Cardiac septum (tissue), 1 donor: ENCODE measurements at regions of chr10 and their contacts with region 1.

Region 1: GRCh38 chr10:53403688-53404087 is 631.1 kb upstream of the MBL2 start:
- DNase-seq: peak; percentile 81

Region 2: DNA sequence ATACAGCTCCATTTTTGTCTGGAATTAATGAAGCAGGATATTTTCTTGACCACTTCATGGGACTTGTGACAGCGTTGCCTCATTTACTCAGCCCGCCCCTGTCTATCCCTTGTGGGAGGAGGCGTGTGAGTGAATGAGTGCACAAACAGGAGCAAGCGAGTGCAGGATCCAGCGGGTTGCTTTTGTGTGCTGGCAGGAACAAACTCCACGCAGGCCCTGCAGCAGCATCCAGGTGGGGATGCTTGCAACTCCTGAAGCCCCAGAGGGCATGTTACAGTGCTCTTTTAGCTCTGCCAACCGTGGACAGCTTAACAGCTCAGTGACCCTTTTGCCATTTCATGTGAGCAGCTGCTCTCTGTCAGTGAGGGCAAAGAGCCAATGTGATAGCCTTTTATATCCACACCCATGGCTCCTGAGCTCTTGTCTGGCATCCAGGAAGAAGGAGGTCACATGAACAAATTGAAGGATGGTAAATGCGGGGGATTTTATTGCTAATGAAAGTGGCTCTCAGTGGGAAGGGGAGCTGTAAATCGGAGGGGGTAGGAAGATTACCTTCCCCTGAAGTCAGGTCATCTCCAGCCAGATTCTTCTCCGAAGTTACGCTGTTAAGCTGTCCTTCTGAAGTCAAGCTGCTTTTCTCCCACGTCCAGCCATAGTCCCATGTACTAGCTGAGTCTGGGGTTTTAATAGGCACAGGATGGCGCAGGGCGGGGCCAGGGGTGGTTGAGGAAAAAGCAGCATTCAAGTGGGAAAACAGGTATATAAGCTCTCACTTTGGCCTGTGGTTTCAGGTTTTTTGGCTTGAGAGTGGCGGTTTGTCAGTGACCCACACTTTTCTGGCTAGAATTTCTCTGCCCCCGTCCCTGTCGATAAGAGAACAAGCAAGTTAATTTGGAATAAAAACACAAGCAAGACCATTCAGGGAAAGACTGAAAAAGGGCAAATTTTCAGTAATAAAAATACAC is 83.6 kb after region 1 on chr10:
- intact Hi-C with region 1: loop called (anchors 1 kb)
- DNase-seq: peak; percentile 68

Region 3: DNA sequence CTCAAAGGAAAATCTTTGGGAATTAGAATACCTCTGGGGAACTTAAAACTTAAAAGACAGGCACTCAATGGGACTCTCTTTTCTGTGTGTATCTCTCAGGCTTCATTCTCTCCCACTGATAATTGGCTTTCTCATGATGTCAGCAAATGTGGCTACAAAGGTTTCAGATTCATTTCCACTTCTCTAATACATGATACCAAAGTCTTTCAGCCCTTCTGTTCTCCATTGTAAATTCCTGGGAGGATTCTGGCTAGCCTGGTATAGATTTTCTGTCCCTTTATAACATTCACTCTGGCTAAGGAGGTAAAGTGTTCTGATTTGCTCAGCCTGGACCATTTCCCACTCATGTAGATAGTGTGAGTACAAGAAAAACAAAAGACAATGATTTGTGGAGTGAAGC is 791.1 kb after region 1 on chr10:
- intact Hi-C with region 1: no loop called
- DNase-seq: no peak